K562 (cell line): ENCODE measurements at regions of chr9 and their contacts with region 1.

Region 1: GRCh38 chr9:130712564-130713285 is 19.1 kb downstream of the EXOSC2 start:
- DNase-seq: peak; percentile 96 to 99 (median 98)
- ATAC-seq: peak; percentile 98
- H3K4me3 ChIP-seq: peak overlapping the region; percentile 98
- H3K27ac ChIP-seq: peak overlapping the region; percentile 99
- H3K4me1 ChIP-seq: peaks cover 7 to 19% of the 10 kb centered on the region in 2 experiments; a peak in 3 of 5 replicates
- H3K27me3 ChIP-seq: no peaks in the 10 kb centered on the region
- CTCF ChIP-seq: no peak
- EP300 ChIP-seq: no peak
- POLR2A ChIP-seq: peak; percentile 81
- RAD21 ChIP-seq: no peak

Region 2: DNA sequence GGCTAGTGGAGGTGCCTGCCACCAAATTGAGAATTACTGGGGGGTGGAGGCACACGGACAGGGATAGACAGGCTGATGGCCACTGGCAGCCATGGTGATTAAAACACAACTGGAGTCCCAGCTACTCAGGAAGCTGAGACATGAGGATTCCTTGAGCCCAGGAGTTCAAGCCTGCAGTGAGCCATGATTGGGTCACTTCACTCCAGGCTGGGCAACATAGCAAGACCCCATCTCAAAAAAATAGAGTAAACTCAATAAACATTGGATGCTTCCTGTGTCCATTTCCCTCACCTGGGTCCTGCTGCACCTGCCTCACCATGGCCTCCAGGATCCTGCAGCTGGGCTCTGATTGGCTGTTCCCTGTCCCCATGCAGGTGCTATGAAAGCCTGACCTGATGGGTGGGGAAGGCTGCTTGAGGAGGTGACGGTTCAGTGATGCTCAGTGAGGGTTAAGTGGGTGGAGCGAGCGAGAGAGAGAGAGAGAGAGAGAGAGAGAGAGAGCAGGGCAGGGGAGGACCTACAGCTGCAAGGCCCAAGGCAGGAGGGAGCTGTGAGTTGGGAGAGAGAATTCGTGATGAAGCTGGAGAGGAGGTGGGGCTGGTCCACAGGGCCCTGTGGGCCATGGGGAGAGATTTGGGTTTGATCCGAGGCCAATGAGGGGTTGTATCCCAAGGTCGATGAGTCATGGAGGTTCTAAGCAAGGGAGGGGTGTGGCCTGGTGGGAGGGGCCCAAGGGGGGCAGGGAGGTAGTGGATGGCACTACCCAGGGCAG is 170.1 kb before region 1 on chr9:
- CTCF ChIA-PET with region 1: no interaction called
- POLR2A ChIA-PET with region 1: no interaction called
- in situ Hi-C with region 1: no loop called
- intact Hi-C with region 1: no loop called
- DNase-seq: peak; percentile 35 to 72 (median 57)
- ATAC-seq: peak; percentile 55
- H3K4me3 ChIP-seq: no peak overlapping the region
- H3K27ac ChIP-seq: no peak overlapping the region
- H3K4me1 ChIP-seq: peaks cover 17 to 40% of the 10 kb centered on the region in 2 experiments
- H3K27me3 ChIP-seq: no peaks in the 10 kb centered on the region
- CTCF ChIP-seq: no peak
- EP300 ChIP-seq: no peak
- POLR2A ChIP-seq: no peak
- RAD21 ChIP-seq: no peak

Region 3: DNA sequence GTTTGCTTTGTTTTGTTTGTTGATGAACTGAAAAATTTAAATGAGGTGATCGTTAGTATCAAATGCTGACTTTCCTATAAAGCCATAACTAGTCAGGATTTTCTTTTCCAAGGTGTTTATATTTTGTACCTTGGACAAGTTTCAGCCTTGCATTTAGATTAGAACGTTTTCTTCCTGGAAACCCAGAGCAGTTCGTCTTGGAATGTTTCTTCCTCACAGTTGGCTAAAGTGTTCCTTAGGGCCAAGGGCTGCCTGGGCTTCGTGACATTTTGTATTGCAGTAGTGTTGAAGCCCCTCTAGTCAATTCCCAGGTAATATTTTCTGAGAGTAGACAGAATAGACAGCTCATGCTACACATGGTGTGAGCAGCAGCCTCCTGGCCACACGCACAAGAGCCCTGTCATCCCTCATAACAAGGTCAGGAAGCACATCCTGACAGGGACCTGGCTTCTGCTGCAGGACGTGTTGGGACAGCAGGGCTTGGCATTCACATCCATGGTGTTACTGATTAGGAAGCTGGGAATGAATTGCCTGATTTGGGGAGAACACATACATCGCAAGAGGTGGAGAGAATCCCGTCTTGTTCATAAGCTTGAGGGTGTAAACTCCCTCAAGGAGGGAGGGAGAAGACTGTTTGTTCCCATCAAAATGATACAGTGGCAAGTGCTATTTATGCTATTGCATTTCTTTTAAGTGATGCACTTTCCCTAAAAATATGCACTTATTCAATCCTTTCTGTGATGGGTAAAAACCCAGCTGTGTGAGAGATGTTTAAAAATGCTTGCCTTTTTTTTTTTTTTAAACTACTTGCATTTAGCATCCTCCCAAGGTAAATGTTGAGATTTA is 101.6 kb before region 1 on chr9:
- CTCF ChIA-PET with region 1: no interaction called
- POLR2A ChIA-PET with region 1: no interaction called
- in situ Hi-C with region 1: no loop called
- intact Hi-C with region 1: no loop called
- DNase-seq: no peak
- ATAC-seq: no peak
- H3K4me3 ChIP-seq: no peak overlapping the region
- H3K27ac ChIP-seq: no peak overlapping the region
- H3K4me1 ChIP-seq: no peaks in the 10 kb centered on the region; a peak in 1 of 5 replicates
- H3K27me3 ChIP-seq: no peaks in the 10 kb centered on the region
- CTCF ChIP-seq: no peak
- EP300 ChIP-seq: no peak
- POLR2A ChIP-seq: no peak
- RAD21 ChIP-seq: no peak

Region 4: DNA sequence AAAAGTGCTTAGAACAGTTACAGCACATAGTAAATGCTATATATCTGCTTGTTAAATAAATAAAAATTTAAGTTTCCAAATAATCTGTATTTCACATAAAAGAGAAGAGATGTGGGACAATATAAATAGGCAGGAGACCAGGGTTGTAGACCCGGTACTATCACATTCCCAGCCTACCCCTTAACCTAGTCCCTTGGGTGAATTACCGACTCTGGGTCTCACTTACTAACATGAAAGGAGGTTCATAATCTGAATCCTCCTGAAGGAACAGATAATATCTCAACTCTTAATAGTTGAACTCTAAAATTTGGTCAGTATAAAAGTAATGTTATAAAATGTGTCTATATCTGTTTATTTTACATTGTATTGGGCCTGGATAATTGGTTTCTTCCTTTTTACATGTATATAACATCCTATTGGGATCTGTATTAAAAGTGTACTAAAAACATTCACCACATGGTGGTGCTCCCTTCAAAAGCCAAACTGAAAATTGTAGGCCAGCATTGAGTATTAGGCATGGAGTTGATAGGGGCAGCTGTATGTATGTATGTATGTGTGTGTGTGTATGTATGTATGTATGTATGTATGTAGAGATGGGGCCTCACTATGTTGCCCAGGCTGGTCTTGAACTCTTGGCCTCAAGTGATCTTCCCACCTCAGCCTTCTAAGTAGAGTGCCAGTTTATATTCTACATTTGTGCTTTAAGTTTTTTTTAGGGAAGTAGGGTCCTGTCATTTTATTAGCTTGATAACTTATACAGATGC is 58.1 kb after region 1 on chr9:
- CTCF ChIA-PET with region 1: no interaction called
- POLR2A ChIA-PET with region 1: interaction called, 4 read pairs
- in situ Hi-C with region 1: loop called (anchors 5 kb)
- intact Hi-C with region 1: no loop called
- DNase-seq: peak; percentile 91 to 98 (median 95)
- ATAC-seq: peak; percentile 89
- H3K4me3 ChIP-seq: no peak overlapping the region
- H3K27ac ChIP-seq: no peak overlapping the region
- H3K4me1 ChIP-seq: peaks cover 6 to 8% of the 10 kb centered on the region in 2 experiments; a peak in 4 of 5 replicates
- H3K27me3 ChIP-seq: no peaks in the 10 kb centered on the region
- CTCF ChIP-seq: no peak
- EP300 ChIP-seq: no peak
- POLR2A ChIP-seq: no peak
- RAD21 ChIP-seq: no peak

Region 5: DNA sequence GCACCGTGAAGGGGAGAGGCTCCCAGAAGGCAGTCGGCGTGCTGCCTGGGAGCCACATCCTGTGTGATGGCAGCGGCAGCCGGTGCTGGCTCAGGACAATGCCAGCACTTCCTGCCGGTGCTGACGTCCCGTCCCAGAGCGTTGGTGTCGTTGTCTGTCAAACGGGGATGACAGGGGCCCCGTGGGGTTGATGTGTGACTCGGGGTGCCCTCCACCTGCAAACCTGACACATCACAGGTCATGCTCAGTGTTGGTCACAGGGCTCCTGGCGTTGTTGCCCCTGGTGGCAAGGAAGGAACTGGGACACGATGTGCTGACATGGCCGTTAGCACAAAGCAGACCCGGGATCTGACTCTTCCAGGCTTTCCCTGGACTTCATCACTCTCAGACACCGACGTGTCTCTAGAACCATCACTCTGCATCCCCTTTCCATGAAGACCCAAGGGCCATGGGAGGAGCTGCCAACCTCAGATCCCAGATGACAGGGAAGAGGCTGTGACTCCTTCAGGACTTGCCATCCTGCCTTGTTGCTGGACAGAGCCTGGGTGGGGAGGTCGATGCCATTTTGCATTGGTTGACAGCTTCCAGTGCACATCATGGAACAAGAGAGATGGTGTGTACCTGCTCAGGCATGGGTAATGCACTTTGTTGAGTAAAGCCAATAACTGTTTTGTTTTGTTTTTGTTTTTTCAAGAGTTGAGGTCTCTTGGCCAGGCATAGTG is 598.3 kb after region 1 on chr9:
- CTCF ChIA-PET with region 1: no interaction called
- POLR2A ChIA-PET with region 1: no interaction called
- in situ Hi-C with region 1: loop called (anchors 25 kb)
- intact Hi-C with region 1: no loop called
- DNase-seq: no peak
- ATAC-seq: no peak
- H3K4me3 ChIP-seq: no peak overlapping the region
- H3K27ac ChIP-seq: no peak overlapping the region
- H3K4me1 ChIP-seq: peaks cover 10 to 61% of the 10 kb centered on the region in 2 experiments; a peak in 4 of 5 replicates
- H3K27me3 ChIP-seq: no peaks in the 10 kb centered on the region
- CTCF ChIP-seq: no peak
- EP300 ChIP-seq: no peak
- POLR2A ChIP-seq: no peak
- RAD21 ChIP-seq: no peak

Region 6: GRCh38 chr9:131370638-131371037 is 657.9 kb after region 1 on chr9:
- CTCF ChIA-PET with region 1: no interaction called
- POLR2A ChIA-PET with region 1: no interaction called
- in situ Hi-C with region 1: no loop called
- intact Hi-C with region 1: no loop called
- DNase-seq: peak in 3 of 4 experiments; percentile 1 to 2 (median 2)
- ATAC-seq: no peak
- H3K4me3 ChIP-seq: no peak overlapping the region
- H3K27ac ChIP-seq: no peak overlapping the region
- H3K4me1 ChIP-seq: peaks cover 12 to 13% of the 10 kb centered on the region in 2 experiments
- H3K27me3 ChIP-seq: no peaks in the 10 kb centered on the region
- CTCF ChIP-seq: no peak
- EP300 ChIP-seq: no peak
- POLR2A ChIP-seq: no peak
- RAD21 ChIP-seq: no peak

Region 7: DNA sequence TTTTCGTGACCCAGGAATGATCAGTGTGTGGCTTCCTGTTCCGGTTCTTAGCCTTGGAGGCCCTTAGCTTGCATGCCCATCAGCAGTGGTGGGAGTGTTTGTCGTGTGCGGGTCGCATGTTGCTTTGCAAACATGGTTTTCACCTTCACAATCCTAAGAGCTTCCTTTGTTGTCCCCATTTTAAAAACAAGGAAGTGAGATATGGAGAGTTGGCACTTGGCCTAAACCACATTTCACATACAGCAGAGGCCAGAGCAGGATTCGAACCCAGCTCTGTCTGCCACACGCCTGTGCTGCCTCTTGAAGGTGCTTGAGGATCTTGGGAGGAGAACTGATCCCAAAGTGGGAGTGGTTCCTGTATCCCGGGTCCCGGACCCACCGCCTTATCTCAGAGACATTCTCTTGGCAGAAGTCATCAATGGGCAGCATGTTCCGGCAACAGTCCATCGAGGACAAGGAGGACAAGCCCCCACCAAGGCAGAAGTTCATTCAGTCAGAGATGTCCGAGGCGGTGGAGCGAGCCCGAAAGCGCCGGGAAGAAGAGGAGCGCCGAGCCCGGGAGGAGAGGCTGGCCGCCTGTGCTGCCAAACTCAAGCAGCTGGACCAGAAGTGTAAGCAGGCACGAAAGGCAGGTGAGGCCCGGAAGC is 751.8 kb after region 1 on chr9:
- CTCF ChIA-PET with region 1: no interaction called
- POLR2A ChIA-PET with region 1: no interaction called
- in situ Hi-C with region 1: loop called (anchors 25 kb)
- intact Hi-C with region 1: no loop called
- DNase-seq: no peak
- ATAC-seq: no peak
- H3K4me3 ChIP-seq: no peak overlapping the region
- H3K27ac ChIP-seq: no peak overlapping the region
- H3K4me1 ChIP-seq: no peaks in the 10 kb centered on the region
- H3K27me3 ChIP-seq: no peaks in the 10 kb centered on the region
- CTCF ChIP-seq: no peak
- EP300 ChIP-seq: no peak
- POLR2A ChIP-seq: no peak
- RAD21 ChIP-seq: no peak

Region 8: DNA sequence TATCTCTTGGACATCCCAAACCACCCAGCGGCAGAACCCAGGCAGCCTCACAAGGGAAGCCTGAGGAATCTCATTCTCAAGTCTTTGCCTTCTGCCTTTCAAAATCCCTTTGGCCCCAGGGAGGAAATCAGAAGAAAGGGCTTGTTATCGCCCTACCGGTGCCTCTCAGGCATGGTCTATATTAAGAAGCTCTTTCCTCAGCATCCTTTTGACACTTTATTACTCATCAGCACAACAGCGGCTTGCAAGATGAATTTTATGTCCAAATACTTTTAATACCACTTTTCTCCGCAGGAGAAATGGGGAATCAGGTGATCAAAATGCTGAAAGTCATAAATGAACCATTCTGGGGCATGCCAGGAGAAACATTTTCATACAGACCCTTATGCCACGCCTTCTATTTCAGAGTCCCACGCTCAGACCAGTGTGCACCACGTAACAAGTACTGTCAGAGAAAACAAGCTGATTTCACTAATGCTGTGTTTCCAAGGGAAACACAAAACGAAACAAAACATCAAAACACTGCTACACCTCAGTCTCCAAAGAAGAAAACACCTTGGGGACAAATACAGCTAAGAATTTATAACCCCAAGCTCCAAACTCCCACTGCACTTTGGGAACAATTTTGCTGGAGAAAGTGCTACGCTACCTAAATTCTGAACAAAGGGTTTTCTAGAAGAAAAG is 997.2 kb after region 1 on chr9:
- CTCF ChIA-PET with region 1: no interaction called
- POLR2A ChIA-PET with region 1: no interaction called
- in situ Hi-C with region 1: loop called (anchors 25 kb)
- intact Hi-C with region 1: no loop called
- DNase-seq: no peak
- ATAC-seq: no peak
- H3K4me3 ChIP-seq: no peak overlapping the region
- H3K27ac ChIP-seq: no peak overlapping the region
- H3K4me1 ChIP-seq: peaks cover 6 to 16% of the 10 kb centered on the region in 2 experiments; a peak in 4 of 5 replicates
- H3K27me3 ChIP-seq: no peaks in the 10 kb centered on the region
- CTCF ChIP-seq: no peak
- EP300 ChIP-seq: no peak
- POLR2A ChIP-seq: no peak
- RAD21 ChIP-seq: no peak